Psoas muscle (tissue), 8 donors: ENCODE measurements at regions of chr3 and their contacts with region 1.

Region 1: DNA sequence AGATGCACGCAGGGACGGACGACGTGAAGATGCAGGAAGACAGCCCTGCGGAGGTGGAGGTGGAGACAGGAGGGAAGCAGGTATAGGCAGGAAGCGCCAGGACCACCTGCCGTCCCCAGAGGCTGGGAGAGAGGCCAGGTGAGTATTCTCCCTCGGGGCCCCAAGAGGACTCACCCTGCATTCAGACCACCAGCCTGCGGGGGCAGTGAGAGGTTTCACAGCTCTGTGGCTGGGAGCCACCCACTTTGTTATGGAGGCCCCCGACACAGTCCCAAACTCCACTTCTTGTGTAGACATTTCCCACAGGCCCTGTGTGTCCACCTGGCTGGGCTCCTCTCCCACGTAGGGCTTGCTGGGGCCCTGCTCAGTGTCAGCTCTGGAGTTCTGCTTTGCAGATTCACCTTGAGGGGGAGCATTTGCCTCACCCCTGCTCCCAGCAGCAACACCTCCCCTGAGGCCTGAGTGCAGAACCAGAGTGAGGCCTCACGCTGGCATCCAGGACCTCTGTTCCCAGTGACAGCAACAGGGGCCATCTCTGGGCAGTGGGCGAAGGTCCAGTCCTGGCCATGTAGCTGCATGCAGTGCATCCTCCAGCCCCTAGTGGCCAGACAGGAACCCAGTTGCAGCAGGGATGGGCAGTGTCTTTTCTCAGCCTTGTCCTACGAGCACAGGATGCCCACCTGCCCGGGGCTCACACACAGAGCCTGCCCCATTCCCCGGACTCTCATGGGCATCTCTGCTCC is 119.4 kb upstream of the IQSEC1 start:
- DNase-seq: no peak
- ATAC-seq: peak in 1 of 4 donors; percentile 29
- H3K4me3 ChIP-seq: no peak overlapping the region
- H3K27ac ChIP-seq: no peak overlapping the region
- H3K4me1 ChIP-seq: peaks cover 5% of the 10 kb centered on the region
- H3K27me3 ChIP-seq: peaks cover 0 to 15% (median 0%) of the 10 kb centered on the region in 3 donors
- CTCF ChIP-seq: no peak

Region 2: DNA sequence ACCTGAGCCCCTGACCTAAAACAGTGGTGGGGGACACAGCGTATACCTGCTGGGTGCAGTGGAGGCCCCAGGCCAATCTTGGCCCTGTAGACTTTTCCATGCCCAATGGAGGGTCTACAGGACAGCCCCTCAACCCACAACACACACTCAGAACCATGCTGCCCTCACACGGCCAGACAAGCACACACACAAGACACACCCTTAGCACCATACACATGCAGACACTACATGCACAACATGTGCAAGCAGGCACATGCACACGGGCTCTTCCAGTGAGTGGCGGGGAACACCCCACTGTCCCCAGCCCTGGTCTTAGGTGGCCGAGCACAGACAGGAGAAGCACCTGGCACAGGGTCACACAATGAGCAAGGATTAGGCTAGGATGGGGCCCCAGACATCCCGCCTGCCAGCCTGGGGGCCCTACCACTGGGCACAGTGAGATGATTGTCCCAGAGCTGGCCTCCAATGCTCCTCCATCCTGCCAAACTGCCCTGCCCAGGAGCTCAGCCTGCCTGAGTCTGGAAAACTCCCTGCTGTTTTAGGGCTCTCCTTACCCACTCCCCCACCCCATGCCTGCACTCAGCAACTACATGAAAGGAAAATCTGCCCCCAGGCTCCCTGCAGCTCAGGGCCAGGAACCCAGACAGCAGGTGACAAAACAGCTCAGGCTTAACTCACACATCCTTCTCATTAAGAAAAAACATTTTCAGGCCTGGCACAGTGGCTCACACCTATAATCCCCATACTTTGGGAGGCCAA is 135.2 kb before region 1 on chr3:
- intact Hi-C with region 1: no loop called
- DNase-seq: no peak
- ATAC-seq: no peak
- H3K4me3 ChIP-seq: no peak overlapping the region
- H3K27ac ChIP-seq: no peak overlapping the region
- H3K4me1 ChIP-seq: no peaks in the 10 kb centered on the region
- H3K27me3 ChIP-seq: no peaks in the 10 kb centered on the region
- CTCF ChIP-seq: no peak

Region 3: GRCh38 chr3:13161024-13161759 is 31.4 kb before region 1 on chr3:
- intact Hi-C with region 1: loop called in 1 of 2 experiments (anchors 1 kb)
- DNase-seq: no peak
- ATAC-seq: no peak
- H3K4me3 ChIP-seq: no peak overlapping the region
- H3K27ac ChIP-seq: no peak overlapping the region
- H3K4me1 ChIP-seq: no peaks in the 10 kb centered on the region
- H3K27me3 ChIP-seq: no peaks in the 10 kb centered on the region
- CTCF ChIP-seq: no peak